AG04449 (cell line): ENCODE measurements at regions of chr2 and their contacts with region 1.

Region 1: GRCh38 chr2:8681786-8682692 is at the start of gene ID2:
- DNase-seq: peak; percentile 92
- H3K4me3 ChIP-seq: peak within 1 kb of the TSS; percentile 92
- CTCF ChIP-seq: no peak

Region 2: DNA sequence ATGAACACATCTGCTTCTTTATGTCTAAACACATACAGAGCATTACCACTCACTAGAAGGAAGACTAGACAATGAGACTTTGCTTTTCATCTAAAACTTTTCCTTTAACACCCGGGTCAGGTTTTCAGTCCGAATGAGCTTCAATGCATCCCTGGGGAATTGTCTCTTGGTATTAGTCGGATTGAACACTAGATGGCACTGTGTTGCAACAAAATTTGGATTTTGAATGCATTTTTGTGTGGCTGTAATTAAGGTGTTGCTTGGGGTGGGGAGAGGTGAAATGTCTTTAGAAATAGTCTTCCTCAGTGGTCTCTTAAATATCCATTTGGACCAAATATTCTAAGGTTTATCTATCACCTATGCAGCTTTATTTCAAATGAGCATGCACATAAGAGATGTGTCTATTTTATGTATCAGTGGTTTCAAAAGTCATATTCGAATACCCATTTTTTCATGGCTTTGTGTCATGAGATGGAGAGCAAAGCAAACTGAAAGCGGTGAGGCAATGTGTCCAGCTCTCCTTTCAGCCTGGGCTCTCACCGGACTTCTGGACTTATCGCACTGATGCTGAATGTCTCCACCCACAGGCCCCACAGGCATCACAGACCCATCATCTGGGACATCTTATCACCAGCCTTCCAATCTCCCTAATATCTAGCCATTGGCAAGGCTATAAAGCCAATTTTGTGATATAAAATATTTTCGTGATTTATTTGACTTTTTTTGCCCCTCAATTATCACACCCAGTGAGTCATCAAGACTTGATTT is 1254.6 kb before region 1 on chr2:
- CTCF ChIA-PET with region 1: interaction called, 18 read pairs
- POLR2A ChIA-PET with region 1: interaction called, 8 read pairs
- DNase-seq: no peak
- H3K4me3 ChIP-seq: no peak overlapping the region
- CTCF ChIP-seq: peak; percentile 46

Region 3: GRCh38 chr2:8086796-8087479 is 595.1 kb before region 1 on chr2:
- CTCF ChIA-PET with region 1: no interaction called
- POLR2A ChIA-PET with region 1: interaction called, 23 read pairs
- DNase-seq: peak; percentile 93
- H3K4me3 ChIP-seq: peak overlapping the region; percentile 25; the same call in 1 of the 2 replicates
- CTCF ChIP-seq: no peak

Region 4: GRCh38 chr2:8606226-8606625 is 75.8 kb before region 1 on chr2:
- CTCF ChIA-PET with region 1: no interaction called
- POLR2A ChIA-PET with region 1: interaction called, 20 read pairs
- DNase-seq: no peak
- H3K4me3 ChIP-seq: no peak overlapping the region
- CTCF ChIP-seq: no peak

Region 5: DNA sequence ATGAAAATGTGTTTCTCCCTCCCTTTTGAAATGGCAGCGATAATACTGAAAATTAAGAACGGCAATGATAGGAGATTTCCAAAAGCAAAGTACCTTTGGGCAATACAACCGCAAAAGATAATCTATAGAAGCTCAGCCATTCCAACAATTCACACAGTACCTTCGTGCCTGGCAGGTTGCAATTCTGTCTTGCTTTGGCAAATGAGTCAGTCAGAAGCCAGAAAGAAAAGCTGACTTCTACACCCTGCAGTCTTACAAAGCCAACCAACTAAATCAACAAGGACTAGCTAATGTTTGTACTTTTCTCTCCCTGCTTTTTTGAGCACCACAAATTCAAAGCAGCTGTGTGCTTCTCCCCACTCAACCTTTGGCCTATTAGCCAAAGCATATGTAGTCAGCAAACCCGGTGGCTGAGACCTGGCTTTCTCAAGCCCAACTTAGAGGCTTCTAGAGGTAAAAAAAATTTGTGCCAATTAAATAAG is 25.8 kb before region 1 on chr2:
- CTCF ChIA-PET with region 1: interaction called, 3 read pairs
- POLR2A ChIA-PET with region 1: interaction called, 11 read pairs
- DNase-seq: no peak
- H3K4me3 ChIP-seq: no peak overlapping the region
- CTCF ChIP-seq: no peak

Region 6: DNA sequence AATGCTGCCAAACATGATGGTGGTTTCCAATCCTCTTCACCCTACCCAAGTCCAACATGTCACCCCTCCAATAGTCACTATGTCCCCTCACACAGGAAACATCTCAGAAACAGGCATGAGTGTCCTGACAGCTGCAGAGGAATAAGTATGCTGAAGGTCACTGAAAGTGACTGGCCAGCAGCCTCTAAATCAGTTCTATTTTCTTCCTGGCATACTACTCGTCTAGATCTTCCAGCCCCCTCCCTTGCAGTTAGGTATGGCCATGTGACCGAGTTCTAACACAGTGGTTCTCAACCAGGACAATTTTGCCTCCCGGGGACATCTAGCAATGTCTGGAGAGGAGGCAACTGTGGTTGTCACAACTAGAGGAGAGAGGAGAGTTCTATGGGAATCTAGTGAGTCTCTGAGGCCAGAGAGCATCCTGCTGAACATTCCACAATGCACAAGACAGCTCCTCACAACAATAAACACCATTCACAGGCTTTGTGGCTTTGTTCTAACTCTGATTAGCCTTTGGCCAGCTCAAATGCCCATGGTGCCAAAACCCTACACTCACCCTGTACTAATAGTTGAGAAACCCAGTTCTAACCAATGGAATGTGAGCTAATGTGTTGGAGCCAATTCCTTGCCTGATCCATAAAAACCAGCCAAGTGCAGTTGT is 12.8 kb before region 1 on chr2:
- CTCF ChIA-PET with region 1: no interaction called
- POLR2A ChIA-PET with region 1: interaction called, 13 read pairs
- DNase-seq: no peak
- H3K4me3 ChIP-seq: no peak overlapping the region
- CTCF ChIP-seq: no peak

Region 7: DNA sequence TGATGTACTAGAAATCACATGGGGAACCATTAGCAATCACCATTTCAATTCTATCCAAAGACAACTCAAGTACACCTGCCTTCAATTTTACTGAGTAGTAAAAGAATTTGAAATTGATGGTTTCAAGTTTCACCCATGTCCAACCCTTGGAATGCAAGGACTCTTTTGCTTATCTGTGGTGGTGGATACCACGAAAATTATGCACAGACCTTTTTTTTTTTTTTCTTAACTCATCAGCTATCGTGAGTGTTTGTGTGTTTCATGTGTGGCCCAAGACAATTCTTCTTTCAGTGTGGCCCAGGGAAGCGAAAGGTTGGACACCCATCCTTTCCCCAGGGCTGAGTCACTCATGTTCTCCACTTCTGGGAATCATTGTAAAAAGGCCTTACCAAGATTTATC is 22.9 kb after region 1 on chr2:
- CTCF ChIA-PET with region 1: no interaction called
- POLR2A ChIA-PET with region 1: no interaction called
- DNase-seq: no peak
- H3K4me3 ChIP-seq: no peak overlapping the region
- CTCF ChIP-seq: no peak